ENCODE measurements at regions of chr17 and their contacts with region 1.

Region 1: DNA sequence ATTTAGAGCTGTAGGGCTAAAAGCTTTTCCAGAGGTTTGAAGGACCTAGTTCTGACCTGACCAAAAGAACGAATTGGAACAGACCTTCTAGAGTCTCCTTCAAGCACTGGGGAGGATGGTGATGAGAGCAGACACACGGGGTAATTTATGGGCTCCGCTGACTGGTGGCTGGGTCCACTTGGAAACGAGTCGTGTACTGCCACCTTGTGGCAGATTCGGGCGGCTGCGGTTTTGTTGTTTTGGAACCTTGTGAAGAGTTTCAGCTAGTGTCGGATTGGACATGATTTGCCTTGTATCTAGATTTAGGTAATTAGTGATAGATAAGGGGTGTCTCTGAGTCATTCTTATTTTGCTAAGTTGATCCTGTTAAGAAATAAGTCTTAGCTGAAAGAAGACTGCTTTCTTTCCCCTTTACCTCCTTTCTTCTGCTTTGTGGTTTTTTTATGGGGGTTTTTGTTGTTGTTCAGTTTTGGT is 98.9 kb downstream of the AATF start:
- DNase-seq: peak; percentile 71 to 84 (median 81)
- H3K4me3 ChIP-seq: no peak overlapping the region
- H3K27ac ChIP-seq: no peak overlapping the region
- H3K4me1 ChIP-seq: peaks cover 0 to 2% (median 0%) of the 10 kb centered on the region in 4 experiments
- H3K27me3 ChIP-seq: no peaks in the 10 kb centered on the region

Region 2: DNA sequence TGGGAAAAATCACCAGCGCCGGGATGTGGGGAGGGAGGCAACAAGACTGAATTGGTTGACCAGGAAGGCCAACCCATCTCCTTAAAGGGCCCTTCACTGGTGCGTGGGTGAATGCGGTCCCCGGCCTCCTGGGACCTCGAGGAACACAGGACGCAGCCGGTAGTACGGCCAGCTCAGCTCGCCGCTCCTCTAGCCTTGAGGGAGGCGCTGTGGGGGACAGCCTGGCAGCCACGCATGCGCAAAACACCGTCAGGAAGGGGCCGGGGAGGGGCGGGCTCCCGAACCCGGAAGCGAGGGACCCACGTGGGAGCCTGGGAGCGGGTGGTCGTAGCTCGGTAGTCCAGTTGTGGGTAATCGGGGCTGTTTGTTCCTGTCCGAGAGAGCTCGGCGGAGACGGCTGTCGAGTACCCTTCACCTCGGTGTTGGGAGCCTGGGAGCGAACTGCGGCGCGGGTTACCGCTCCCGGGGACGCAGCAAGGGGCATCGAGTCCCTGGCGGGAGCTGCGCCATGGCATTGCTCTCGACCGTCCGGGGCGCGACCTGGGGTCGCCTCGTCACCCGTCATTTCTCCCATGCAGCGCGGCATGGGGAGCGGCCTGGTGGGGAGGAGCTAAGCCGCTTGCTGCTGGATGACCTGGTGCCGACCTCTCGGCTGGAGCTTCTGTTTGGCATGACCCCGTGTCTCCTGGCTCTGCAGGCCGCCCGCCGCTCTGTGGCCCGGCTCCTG is 446.2 kb before region 1 on chr17 and contains the start of gene MRM1:
- CTCF ChIA-PET with region 1: interaction called, 22 read pairs
- POLR2A ChIA-PET with region 1: no interaction called
- DNase-seq: peak; percentile 84 to 90 (median 87)
- H3K4me3 ChIP-seq: peak within 1 kb of the TSS; percentile 80 to 97 (median 90)
- H3K27ac ChIP-seq: peak within 1 kb of the TSS; percentile 67 to 82
- H3K4me1 ChIP-seq: peaks cover 8 to 38% (median 30%) of the 10 kb centered on the region in 4 experiments
- H3K27me3 ChIP-seq: no peaks in the 10 kb centered on the region

Region 3: GRCh38 chr17:36629252-36629847 is 418.3 kb before region 1 on chr17:
- CTCF ChIA-PET with region 1: interaction called, 15 read pairs
- POLR2A ChIA-PET with region 1: no interaction called
- DNase-seq: peak; percentile 66 to 76 (median 75)
- H3K4me3 ChIP-seq: no peak overlapping the region
- H3K27ac ChIP-seq: no peak overlapping the region
- H3K4me1 ChIP-seq: no peaks in the 10 kb centered on the region
- H3K27me3 ChIP-seq: peaks cover 0 to 11% (median 9%) of the 10 kb centered on the region in 5 experiments

Region 4: GRCh38 chr17:37062021-37062420 is 14.4 kb after region 1 on chr17:
- CTCF ChIA-PET with region 1: interaction called, 21 read pairs
- POLR2A ChIA-PET with region 1: no interaction called
- DNase-seq: no peak
- H3K4me3 ChIP-seq: no peak overlapping the region
- H3K27ac ChIP-seq: no peak overlapping the region
- H3K4me1 ChIP-seq: no peaks in the 10 kb centered on the region
- H3K27me3 ChIP-seq: peaks cover 0 to 22% (median 10%) of the 10 kb centered on the region in 5 experiments

Region 5: GRCh38 chr17:37081287-37081686 is 33.6 kb after region 1 on chr17:
- CTCF ChIA-PET with region 1: interaction called, 13 read pairs
- POLR2A ChIA-PET with region 1: no interaction called
- DNase-seq: peak; percentile 57 to 78 (median 70)
- H3K4me3 ChIP-seq: no peak overlapping the region
- H3K27ac ChIP-seq: no peak overlapping the region
- H3K4me1 ChIP-seq: peaks cover 4 to 23% (median 13%) of the 10 kb centered on the region in 4 experiments
- H3K27me3 ChIP-seq: no peaks in the 10 kb centered on the region

Region 6: GRCh38 chr17:37107406-37108083 is 59.9 kb after region 1 on chr17:
- CTCF ChIA-PET with region 1: no interaction called
- POLR2A ChIA-PET with region 1: no interaction called
- DNase-seq: peak in 2 of 3 donors; percentile 23 to 36
- H3K4me3 ChIP-seq: no peak overlapping the region
- H3K27ac ChIP-seq: no peak overlapping the region
- H3K4me1 ChIP-seq: no peaks in the 10 kb centered on the region
- H3K27me3 ChIP-seq: no peaks in the 10 kb centered on the region

Region 7: GRCh38 chr17:37123941-37124820 is 76.5 kb after region 1 on chr17:
- CTCF ChIA-PET with region 1: no interaction called
- POLR2A ChIA-PET with region 1: no interaction called
- DNase-seq: peak; percentile 29 to 79 (median 67)
- H3K4me3 ChIP-seq: no peak overlapping the region
- H3K27ac ChIP-seq: no peak overlapping the region
- H3K4me1 ChIP-seq: peaks cover 2 to 18% (median 5%) of the 10 kb centered on the region in 4 experiments
- H3K27me3 ChIP-seq: no peaks in the 10 kb centered on the region

Measured in common myeloid progenitor, CD34-positive (primary cell).